CD8-positive, alpha-beta memory T cell (primary cell): ENCODE measurements at regions of chr6 and their contacts with region 1.

Region 1: DNA sequence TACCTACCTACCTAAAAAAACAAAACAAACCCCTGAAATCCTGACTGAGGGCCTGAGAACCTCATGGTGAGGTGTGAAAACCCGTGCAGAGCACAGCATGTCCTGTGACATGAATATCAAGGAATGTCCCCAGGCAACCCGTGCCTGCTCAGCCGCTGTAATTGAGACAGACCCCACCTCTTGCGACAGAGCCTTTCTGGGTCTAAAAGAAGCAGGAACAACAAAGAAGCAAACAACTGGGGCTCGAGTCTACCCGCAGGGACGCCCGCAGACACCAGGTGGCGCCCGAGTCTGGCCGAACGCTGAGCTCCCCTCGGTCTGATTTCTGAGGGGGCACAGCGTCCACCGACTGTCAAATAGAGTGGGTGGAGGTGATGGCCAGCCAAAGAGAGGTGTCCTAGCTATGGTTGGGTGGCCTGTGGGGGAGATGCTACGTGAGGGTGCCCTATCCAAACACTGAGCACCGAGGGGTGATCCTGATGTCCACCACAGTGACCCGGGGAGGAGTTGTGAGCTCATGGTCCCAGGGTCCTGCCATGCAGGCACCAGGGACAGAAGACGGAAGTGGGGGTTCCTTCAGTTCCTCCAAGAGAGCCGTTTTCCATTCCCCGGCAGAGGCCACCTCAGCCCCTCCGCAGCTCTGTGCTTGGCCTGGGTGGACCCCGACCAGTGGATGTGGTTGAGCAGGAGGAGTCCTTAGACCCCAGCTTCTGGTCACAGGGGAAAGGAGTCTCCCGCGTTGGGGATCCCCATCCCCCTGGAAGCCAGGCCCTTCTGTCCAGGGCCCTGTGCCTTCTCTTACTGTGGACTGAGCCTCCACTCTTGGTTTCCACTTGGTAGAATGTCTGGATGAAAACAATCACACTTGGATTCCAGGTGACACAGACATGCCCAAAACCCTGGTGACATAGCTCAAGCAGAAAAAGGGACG is 268.2 kb downstream of the CDC5L start:
- DNase-seq: peak; percentile 51 to 77 (median 67)
- H3K4me3 ChIP-seq: peak overlapping the region; percentile 27
- H3K4me3 Mint-ChIP-seq: peak overlapping the region in 5 of 7 donors; percentile 57 to 75 (median 66)
- H3K27ac ChIP-seq: no peak overlapping the region
- H3K27ac Mint-ChIP-seq: peak overlapping the region in 6 of 8 donors; percentile 3 to 91 (median 80)
- H3K4me1 ChIP-seq: peaks cover 11% of the 10 kb centered on the region
- H3K4me1 Mint-ChIP-seq: peaks cover 6 to 8% (median 7%) of the 10 kb centered on the region in 3 donors
- H3K27me3 ChIP-seq: no peaks in the 10 kb centered on the region
- H3K27me3 Mint-ChIP-seq: peaks cover 7 to 10% of the 10 kb centered on the region in 2 donors

Region 2: GRCh38 chr6:44221291-44221960 is 434.3 kb before region 1 on chr6:
- CTCF ChIA-PET with region 1: no interaction called
- POLR2A ChIA-PET with region 1: no interaction called
- DNase-seq: peak; percentile 62 to 84 (median 66)
- H3K4me3 ChIP-seq: no peak overlapping the region
- H3K4me3 Mint-ChIP-seq: peak overlapping the region in 4 of 7 donors; percentile 20 to 62 (median 38)
- H3K27ac ChIP-seq: peak overlapping the region; percentile 20
- H3K27ac Mint-ChIP-seq: peak overlapping the region in 5 of 8 donors; percentile 45 to 82 (median 71)
- H3K4me1 ChIP-seq: peaks cover 10% of the 10 kb centered on the region
- H3K4me1 Mint-ChIP-seq: peaks cover 16 to 27% (median 17%) of the 10 kb centered on the region in 3 donors
- H3K27me3 ChIP-seq: peaks cover 5% of the 10 kb centered on the region
- H3K27me3 Mint-ChIP-seq: peaks cover 10 to 11% of the 10 kb centered on the region in 2 donors

Region 3: GRCh38 chr6:44606504-44606903 is 49.2 kb before region 1 on chr6:
- CTCF ChIA-PET with region 1: no interaction called
- POLR2A ChIA-PET with region 1: no interaction called
- DNase-seq: no peak
- H3K4me3 ChIP-seq: no peak overlapping the region
- H3K4me3 Mint-ChIP-seq: no peak overlapping the region
- H3K27ac ChIP-seq: no peak overlapping the region
- H3K27ac Mint-ChIP-seq: no peak overlapping the region
- H3K4me1 ChIP-seq: no peaks in the 10 kb centered on the region
- H3K4me1 Mint-ChIP-seq: no peaks in the 10 kb centered on the region
- H3K27me3 ChIP-seq: no peaks in the 10 kb centered on the region
- H3K27me3 Mint-ChIP-seq: peaks cover 0 to 4% of the 10 kb centered on the region in 2 donors

Region 4: GRCh38 chr6:44697327-44697726 is 41.6 kb after region 1 on chr6:
- CTCF ChIA-PET with region 1: no interaction called
- POLR2A ChIA-PET with region 1: no interaction called
- DNase-seq: no peak
- H3K4me3 ChIP-seq: no peak overlapping the region
- H3K4me3 Mint-ChIP-seq: no peak overlapping the region
- H3K27ac ChIP-seq: no peak overlapping the region
- H3K27ac Mint-ChIP-seq: no peak overlapping the region
- H3K4me1 ChIP-seq: no peaks in the 10 kb centered on the region
- H3K4me1 Mint-ChIP-seq: no peaks in the 10 kb centered on the region
- H3K27me3 ChIP-seq: no peaks in the 10 kb centered on the region
- H3K27me3 Mint-ChIP-seq: peaks cover 3 to 8% of the 10 kb centered on the region in 2 donors

Region 5: GRCh38 chr6:45421709-45422502 is 766.2 kb after region 1 on chr6:
- CTCF ChIA-PET with region 1: interaction called, 17 read pairs
- POLR2A ChIA-PET with region 1: interaction called, 3 read pairs
- DNase-seq: peak; percentile 41 to 64 (median 56)
- H3K4me3 ChIP-seq: peak overlapping the region; percentile 68
- H3K4me3 Mint-ChIP-seq: peak overlapping the region; percentile 91 to 100 (median 98)
- H3K27ac ChIP-seq: peak overlapping the region; percentile 45
- H3K27ac Mint-ChIP-seq: peak overlapping the region; percentile 88 to 100 (median 96)
- H3K4me1 ChIP-seq: peaks cover 24% of the 10 kb centered on the region
- H3K4me1 Mint-ChIP-seq: peaks cover 41 to 54% (median 53%) of the 10 kb centered on the region in 3 donors
- H3K27me3 ChIP-seq: peaks cover 7% of the 10 kb centered on the region
- H3K27me3 Mint-ChIP-seq: peaks cover 20 to 22% of the 10 kb centered on the region in 2 donors

Region 6: DNA sequence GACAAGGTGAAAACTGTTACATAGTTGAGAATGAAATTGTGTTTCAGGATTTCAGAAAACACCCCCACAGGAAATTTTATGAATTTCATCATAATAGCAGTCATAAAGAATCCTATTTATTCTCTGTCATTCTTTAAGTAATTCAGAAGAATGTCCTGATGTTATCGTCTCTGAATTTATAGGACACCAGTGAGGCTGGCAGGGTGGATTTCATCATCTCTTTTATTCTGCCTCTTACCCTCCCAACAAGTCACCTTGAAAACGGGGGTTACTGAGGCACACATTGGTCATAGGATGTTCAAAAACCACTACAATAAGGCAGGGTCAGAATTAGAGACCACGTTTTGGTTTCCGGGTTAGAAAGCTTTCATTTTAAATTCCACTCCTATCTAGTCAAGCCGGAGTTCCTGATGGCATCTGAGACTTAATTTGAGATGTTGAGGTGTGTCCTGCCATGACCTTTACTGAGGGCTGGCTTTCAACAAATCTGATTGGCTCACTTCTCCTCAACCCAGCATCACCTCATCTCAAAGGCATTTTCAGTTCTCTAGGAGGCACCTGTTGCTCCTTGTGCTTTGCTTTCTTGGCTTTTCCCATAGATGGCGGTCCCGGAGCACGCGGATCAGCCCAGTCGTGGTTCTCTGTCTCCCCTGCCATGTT is 952.7 kb after region 1 on chr6:
- CTCF ChIA-PET with region 1: no interaction called
- POLR2A ChIA-PET with region 1: interaction called, 15 read pairs
- DNase-seq: no peak
- H3K4me3 ChIP-seq: no peak overlapping the region
- H3K4me3 Mint-ChIP-seq: peak overlapping the region in 5 of 7 donors; percentile 11 to 82 (median 22)
- H3K27ac ChIP-seq: no peak overlapping the region
- H3K27ac Mint-ChIP-seq: peak overlapping the region in 2 of 8 donors; percentile 5 to 23
- H3K4me1 ChIP-seq: no peaks in the 10 kb centered on the region
- H3K4me1 Mint-ChIP-seq: peaks cover 12 to 27% (median 13%) of the 10 kb centered on the region in 3 donors
- H3K27me3 ChIP-seq: no peaks in the 10 kb centered on the region
- H3K27me3 Mint-ChIP-seq: peaks cover 0 to 7% of the 10 kb centered on the region in 2 donors

Region 7: GRCh38 chr6:45714741-45715507 is 1059.2 kb after region 1 on chr6:
- CTCF ChIA-PET with region 1: interaction called, 71 read pairs
- POLR2A ChIA-PET with region 1: interaction called, 4 read pairs
- DNase-seq: peak; percentile 8 to 65 (median 57)
- H3K4me3 ChIP-seq: no peak overlapping the region
- H3K4me3 Mint-ChIP-seq: peak overlapping the region in 6 of 7 donors; percentile 35 to 67 (median 58)
- H3K27ac ChIP-seq: no peak overlapping the region
- H3K27ac Mint-ChIP-seq: peak overlapping the region in 3 of 8 donors; percentile 35 to 49 (median 42)
- H3K4me1 ChIP-seq: peaks cover 5% of the 10 kb centered on the region
- H3K4me1 Mint-ChIP-seq: peaks cover 10 to 29% (median 23%) of the 10 kb centered on the region in 3 donors
- H3K27me3 ChIP-seq: no peaks in the 10 kb centered on the region
- H3K27me3 Mint-ChIP-seq: peaks cover 0 to 7% of the 10 kb centered on the region in 2 donors